ENCODE measurements at regions of chr4 and their contacts with region 1.

Region 1: GRCh38 chr4:133555671-133556070 is 406.6 kb downstream of the PCDH10 start:
- DNase-seq: no peak
- H3K4me3 ChIP-seq: no peak overlapping the region
- H3K27ac ChIP-seq: no peak overlapping the region
- H3K4me1 ChIP-seq: no peaks in the 10 kb centered on the region
- H3K27me3 ChIP-seq: no peaks in the 10 kb centered on the region
- CTCF ChIP-seq: no peak

Region 2: GRCh38 chr4:133537780-133538281 is 17.8 kb before region 1 on chr4:
- CTCF ChIA-PET with region 1: no interaction called
- POLR2A ChIA-PET with region 1: no interaction called
- intact Hi-C with region 1: loop called (anchors 2 kb)
- DNase-seq: no peak
- H3K4me3 ChIP-seq: no peak overlapping the region
- H3K27ac ChIP-seq: no peak overlapping the region
- H3K4me1 ChIP-seq: no peaks in the 10 kb centered on the region
- H3K27me3 ChIP-seq: no peaks in the 10 kb centered on the region
- CTCF ChIP-seq: no peak

Measured in PC-9 (cell line).